B cell (primary cell): ENCODE measurements at regions of chr5 and their contacts with region 1.

Region 1: GRCh38 chr5:67221487-67222242 is 25.1 kb upstream of the CD180 start:
- DNase-seq: peak; percentile 71
- ATAC-seq: peak; percentile 70
- H3K4me3 ChIP-seq: peak overlapping the region in 4 of 5 experiments; percentile 23 to 59 (median 42)
- H3K4me3 Mint-ChIP-seq: peak overlapping the region; percentile 87
- H3K27ac ChIP-seq: peak overlapping the region; percentile 61 to 71
- H3K27ac Mint-ChIP-seq: peak overlapping the region; percentile 97
- H3K4me1 ChIP-seq: peaks cover 41 to 48% of the 10 kb centered on the region in 2 donors
- H3K4me1 Mint-ChIP-seq: peaks cover 53% of the 10 kb centered on the region
- H3K27me3 ChIP-seq: no peaks in the 10 kb centered on the region
- H3K27me3 Mint-ChIP-seq: no peaks in the 10 kb centered on the region
- CTCF ChIP-seq: no peak

Region 2: DNA sequence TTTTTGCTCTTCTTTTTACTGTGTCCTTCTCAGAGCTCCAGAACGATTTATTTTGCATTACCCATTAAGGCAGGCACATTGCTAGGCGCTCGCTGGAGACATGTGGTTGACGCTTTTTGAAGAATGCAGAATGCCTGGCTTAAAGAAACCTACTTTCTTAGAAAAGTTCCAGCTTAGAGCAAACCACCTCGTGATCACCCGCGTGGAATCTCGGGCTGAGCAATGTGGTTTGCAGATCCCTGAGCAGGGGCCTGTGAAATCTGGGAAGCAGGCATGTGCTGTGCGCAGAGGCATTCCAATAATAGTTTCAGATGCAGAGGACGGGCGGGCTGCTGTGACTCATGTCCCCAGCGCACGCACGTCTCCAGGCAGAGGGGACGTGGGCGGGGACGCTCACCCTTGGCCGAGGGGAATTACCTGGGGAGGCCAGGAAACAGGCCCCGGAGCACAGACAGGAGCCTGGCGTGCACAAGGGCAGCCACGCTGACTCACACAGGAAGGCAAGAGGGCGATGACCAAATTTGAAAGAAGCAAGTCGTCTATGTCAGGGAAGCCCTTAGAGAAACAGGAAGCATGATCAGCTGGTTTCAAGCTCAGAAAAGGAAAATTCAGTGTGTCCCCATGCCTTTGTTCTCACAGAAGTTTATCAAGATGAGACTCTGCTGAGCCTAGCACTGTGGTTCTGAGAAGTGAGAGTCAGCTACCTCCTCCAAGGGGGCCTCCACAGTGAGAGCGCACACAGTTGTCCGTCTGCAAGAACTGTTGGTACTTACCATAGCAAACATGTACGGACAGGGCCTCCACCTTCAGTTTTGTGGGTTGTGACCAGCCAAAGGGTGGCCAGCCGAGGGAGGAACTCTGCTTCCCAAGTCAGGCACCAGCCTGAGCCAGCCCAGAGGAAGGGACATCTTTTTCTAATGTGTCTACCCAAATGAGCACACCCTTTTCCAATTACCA is 1212.5 kb after region 1 on chr5:
- CTCF ChIA-PET with region 1: no interaction called
- POLR2A ChIA-PET with region 1: no interaction called
- intact Hi-C with region 1: loop called (anchors 1 kb)
- DNase-seq: peak; percentile 84
- ATAC-seq: peak; percentile 97
- H3K4me3 ChIP-seq: peak overlapping the region in 4 of 5 experiments; percentile 12 to 29 (median 14)
- H3K4me3 Mint-ChIP-seq: peak overlapping the region; percentile 78
- H3K27ac ChIP-seq: peak overlapping the region; percentile 50 to 64
- H3K27ac Mint-ChIP-seq: peak overlapping the region; percentile 89
- H3K4me1 ChIP-seq: peaks cover 28 to 30% of the 10 kb centered on the region in 2 donors
- H3K4me1 Mint-ChIP-seq: peaks cover 33% of the 10 kb centered on the region
- H3K27me3 ChIP-seq: no peaks in the 10 kb centered on the region
- H3K27me3 Mint-ChIP-seq: no peaks in the 10 kb centered on the region
- CTCF ChIP-seq: no peak